ENCODE measurements at regions of chr16 and their contacts with region 1.

Region 1: GRCh38 chr16:3134564-3135417 is at the start of gene ZNF213:
- DNase-seq: peak; percentile 93
- H3K4me3 Mint-ChIP-seq: peak within 1 kb of the TSS; percentile 95
- H3K27ac Mint-ChIP-seq: peak within 1 kb of the TSS; percentile 92
- H3K4me1 Mint-ChIP-seq: peaks cover 22% of the 10 kb centered on the region
- H3K27me3 Mint-ChIP-seq: no peaks in the 10 kb centered on the region
- total RNA-seq, gene ZNF213: 9.6 and 12.4 TPM in 2 replicates

Region 2: GRCh38 chr16:3023669-3024478 is 110.9 kb before region 1 on chr16 and contains the starts of genes HCFC1R1 and THOC6:
- intact Hi-C with region 1: loop called (anchors 1 kb)
- DNase-seq: peak; percentile 94
- H3K4me3 Mint-ChIP-seq: peak within 1 kb of the TSS; percentile 84
- H3K27ac Mint-ChIP-seq: peak within 1 kb of the TSS; percentile 91
- H3K4me1 Mint-ChIP-seq: peaks cover 36% of the 10 kb centered on the region
- H3K27me3 Mint-ChIP-seq: peaks cover 1% of the 10 kb centered on the region
- total RNA-seq, gene HCFC1R1: 30.0 and 30.9 TPM in 2 replicates
- total RNA-seq, gene THOC6: 48.3 and 49.0 TPM in 2 replicates

Region 3: GRCh38 chr16:3106205-3106928 is 28.4 kb before region 1 on chr16:
- intact Hi-C with region 1: loop called (anchors 1 kb)
- DNase-seq: peak; percentile 88
- H3K4me3 Mint-ChIP-seq: peak overlapping the region; percentile 85
- H3K27ac Mint-ChIP-seq: peak overlapping the region; percentile 95
- H3K4me1 Mint-ChIP-seq: peaks cover 22% of the 10 kb centered on the region
- H3K27me3 Mint-ChIP-seq: no peaks in the 10 kb centered on the region

Region 4: DNA sequence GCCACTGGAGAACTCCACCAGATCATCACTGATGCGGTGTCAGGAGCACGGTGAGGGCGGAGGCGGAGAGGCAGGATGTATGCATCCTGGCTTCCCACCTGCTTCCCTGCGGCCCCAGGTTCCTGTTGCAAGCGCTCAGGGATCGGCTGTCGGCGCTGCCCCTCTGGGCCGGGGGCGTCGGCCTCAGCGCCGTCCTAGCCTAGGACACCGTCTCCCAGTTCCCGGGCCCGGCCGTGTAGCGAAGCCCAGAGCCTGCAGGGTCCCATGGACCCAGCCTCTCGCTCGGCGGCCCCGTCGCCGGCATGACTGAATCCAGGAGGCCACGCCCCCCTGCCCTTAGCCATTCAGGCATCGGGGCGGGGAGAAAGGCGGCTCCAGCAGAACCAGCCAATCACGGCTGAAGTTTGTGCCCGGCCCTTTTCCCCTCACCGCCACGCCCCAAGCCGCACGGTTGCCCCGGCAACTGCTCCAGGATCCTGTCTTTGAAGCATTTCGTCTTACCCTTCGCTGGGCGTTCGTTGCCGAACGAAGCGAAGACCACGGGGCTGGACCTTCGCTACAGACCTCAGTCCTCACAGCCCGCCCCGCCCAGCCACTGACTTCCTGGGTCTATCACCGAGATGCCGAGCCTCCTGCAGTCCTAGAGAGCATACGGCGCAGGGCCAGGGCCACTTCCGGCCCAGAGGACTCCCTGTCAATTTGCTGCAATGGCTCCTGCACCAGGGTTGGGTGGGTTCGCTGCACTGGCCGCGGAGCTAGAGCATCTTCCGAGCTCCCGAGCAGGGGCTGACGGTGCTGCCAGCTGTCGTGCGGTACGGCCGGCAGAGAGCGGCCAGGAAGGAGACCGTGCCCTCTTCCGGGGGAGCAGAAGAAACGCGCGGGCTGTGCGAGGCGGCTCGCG is 10.6 kb before region 1 on chr16:
- intact Hi-C with region 1: loop called (anchors 1 kb)
- DNase-seq: peak; percentile 96
- H3K4me3 Mint-ChIP-seq: peak overlapping the region; percentile 97
- H3K27ac Mint-ChIP-seq: peak overlapping the region; percentile 93
- H3K4me1 Mint-ChIP-seq: peaks cover 42% of the 10 kb centered on the region
- H3K27me3 Mint-ChIP-seq: peaks cover 3% of the 10 kb centered on the region

Region 5: DNA sequence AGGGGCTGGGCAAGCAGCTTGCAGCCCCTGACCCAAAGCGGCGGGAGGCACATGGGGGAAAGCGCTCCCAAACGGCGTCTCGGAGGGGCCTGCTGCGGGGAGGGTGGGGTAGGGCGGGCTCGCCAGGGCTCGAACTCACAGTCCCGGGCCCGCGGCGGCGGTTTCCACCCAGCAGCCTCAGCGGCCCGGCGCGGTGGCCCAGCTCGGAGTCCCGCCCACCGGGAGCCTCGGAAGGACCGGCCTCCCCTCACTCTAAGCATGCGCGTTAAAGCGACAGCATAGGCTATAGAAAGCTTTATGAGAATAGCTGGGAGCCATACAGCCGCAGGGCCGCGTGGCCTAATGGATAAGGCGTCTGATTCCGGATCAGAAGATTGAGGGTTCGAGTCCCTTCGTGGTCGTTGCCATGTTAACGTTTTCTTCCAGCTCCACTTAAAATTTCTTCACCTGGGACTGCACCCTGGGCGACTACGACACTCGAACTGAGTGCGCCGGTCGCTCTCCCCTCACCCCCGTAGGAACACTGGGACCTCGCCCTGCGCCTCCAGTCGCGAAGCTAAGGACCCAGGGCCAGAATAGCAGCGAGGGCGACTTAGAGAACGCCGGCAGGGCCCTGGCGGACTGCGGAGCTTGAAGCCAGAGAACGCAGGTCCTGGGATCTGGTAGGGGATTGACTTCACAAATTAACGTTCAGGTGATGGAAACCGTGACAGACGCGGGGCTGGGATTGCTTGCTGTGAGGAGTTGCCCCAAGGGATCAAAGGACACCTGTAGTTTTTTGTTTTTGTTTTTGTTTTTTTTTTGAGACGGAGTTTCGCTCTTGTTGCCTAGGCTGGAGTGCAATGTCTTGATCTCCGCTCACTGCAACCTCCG is 15.8 kb after region 1 on chr16:
- intact Hi-C with region 1: loop called (anchors 1 kb)
- DNase-seq: peak; percentile 98
- H3K4me3 Mint-ChIP-seq: peak overlapping the region; percentile 85
- H3K27ac Mint-ChIP-seq: peak overlapping the region; percentile 93
- H3K4me1 Mint-ChIP-seq: peaks cover 33% of the 10 kb centered on the region
- H3K27me3 Mint-ChIP-seq: peaks cover 10% of the 10 kb centered on the region

Region 6: GRCh38 chr16:3166510-3166895 is 31.7 kb after region 1 on chr16:
- intact Hi-C with region 1: loop called (anchors 1 kb)
- DNase-seq: no peak
- H3K4me3 Mint-ChIP-seq: no peak overlapping the region
- H3K27ac Mint-ChIP-seq: no peak overlapping the region
- H3K4me1 Mint-ChIP-seq: peaks cover 28% of the 10 kb centered on the region
- H3K27me3 Mint-ChIP-seq: peaks cover 33% of the 10 kb centered on the region

Region 7: GRCh38 chr16:3457434-3458252 is 322.9 kb after region 1 on chr16:
- intact Hi-C with region 1: loop called (anchors 1 kb)
- DNase-seq: peak; percentile 88
- H3K4me3 Mint-ChIP-seq: peak overlapping the region; percentile 83
- H3K27ac Mint-ChIP-seq: peak overlapping the region; percentile 77
- H3K4me1 Mint-ChIP-seq: peaks cover 42% of the 10 kb centered on the region
- H3K27me3 Mint-ChIP-seq: no peaks in the 10 kb centered on the region

Measured in activated T-helper 1 cell treated with anti-CD3 and anti-CD28 coated beads, Interleukin-12 subunit alpha, Interleukin-12 subunit beta, Interleukin-2, Interleukin-4 antibody, amounts not matched to agents 30 ng/mL and 10 ng/mL and 1 ng/mL, durations not matched to agents 14 hours and 24 hours and 36 hours (primary cell).